Mucosa of descending colon (tissue), 3 donors: ENCODE measurements at regions of chr3 and their contacts with region 1.

Region 1: DNA sequence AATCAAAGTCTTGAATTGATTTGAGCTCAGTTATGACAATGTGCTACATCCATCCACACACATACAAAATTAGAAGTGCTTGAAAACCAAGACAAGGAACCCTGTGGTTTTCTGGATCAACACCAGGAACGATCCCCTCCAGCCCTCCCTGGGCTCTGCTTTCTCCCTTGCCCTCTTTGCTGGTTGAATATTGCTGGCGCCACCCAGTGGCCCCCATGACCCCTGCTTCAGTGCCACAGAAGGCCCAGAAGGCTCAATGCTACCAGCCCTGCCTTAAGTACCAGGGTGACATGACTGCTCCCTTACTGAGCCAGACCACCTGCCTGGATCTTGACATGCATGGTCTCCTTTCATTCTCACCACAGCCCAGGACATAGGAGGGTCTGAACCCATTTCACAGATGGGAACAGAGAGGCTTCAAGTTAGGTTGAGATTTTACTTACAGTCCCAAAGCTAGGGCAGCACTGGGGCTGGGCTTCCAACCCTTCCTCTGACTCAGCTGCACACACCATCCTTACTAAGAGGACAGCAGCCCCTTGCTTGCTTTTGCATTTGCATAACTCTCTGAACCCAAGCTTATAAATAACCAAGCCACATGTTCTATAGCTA is 15.0 kb downstream of the IL12A start:
- DNase-seq: peak in 2 of 3 donors; percentile 79 to 81
- ATAC-seq: peak; percentile 87
- H3K4me3 ChIP-seq: no peak overlapping the region
- H3K4me1 ChIP-seq: no peaks in the 10 kb centered on the region
- CTCF ChIP-seq: peak; percentile 56

Region 2: DNA sequence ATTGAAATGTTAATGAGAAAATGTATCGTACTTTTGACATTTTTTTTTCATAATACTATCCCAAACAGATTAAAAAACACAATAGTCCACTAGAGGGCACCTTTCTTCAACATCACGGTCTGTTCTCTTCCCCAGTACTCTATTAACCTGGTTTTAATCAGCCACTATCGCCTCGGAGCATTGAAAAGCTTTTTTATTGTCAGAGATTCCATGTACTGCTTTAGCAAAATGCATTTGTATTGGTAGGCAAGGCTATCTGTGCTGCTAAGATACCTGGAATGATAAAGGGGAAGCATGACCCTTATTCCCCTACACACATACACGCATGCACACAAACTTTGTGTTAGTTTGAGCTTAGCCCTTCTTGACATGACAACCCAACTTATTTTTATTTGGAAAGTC is 175.1 kb before region 1 on chr3:
- intact Hi-C with region 1: loop called (anchors 10 kb)
- DNase-seq: no peak
- ATAC-seq: peak; percentile 50
- H3K4me3 ChIP-seq: no peak overlapping the region
- H3K4me1 ChIP-seq: peaks cover 16% of the 10 kb centered on the region
- CTCF ChIP-seq: no peak

Region 3: GRCh38 chr3:159884661-159885402 is 118.8 kb before region 1 on chr3:
- intact Hi-C with region 1: loop called in 1 of 2 experiments (anchors 5 kb)
- DNase-seq: peak in 1 of 3 donors; percentile 15
- ATAC-seq: peak; percentile 60
- H3K4me3 ChIP-seq: no peak overlapping the region
- H3K4me1 ChIP-seq: no peaks in the 10 kb centered on the region
- CTCF ChIP-seq: no peak